Activated naive CD4-positive, alpha-beta T cell treated with anti-CD3 and anti-CD28 coated beads for 36 hours (primary cell): ENCODE measurements at regions of chr14 and their contacts with region 1.

Region 1: DNA sequence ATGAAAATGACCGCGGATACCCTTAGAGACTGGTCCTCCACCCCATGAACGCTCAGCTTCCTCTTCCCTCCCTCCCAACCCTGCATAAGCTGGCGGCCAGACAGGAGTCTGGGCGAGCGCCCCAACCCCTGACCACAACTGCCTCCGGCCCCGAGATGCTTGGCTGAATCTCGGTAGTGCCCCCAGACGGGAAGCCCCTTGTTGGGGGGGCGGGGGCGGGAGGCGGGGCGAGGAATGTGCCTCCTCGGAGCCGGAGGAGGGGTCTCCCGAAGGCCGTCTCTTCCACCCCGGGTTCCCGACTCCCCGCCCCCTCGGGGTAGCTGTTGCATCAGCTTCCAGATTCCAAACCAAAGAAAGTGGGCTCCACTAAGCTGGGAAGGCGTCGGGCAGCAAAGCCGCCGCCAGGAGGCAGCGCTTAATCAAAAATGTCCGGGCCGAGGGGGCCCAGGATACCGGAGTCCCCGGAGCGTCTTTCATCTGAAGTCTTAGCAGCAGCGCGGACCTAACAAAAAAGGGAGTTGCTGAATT is 7.1 kb upstream of the MRPL52 start:
- DNase-seq: peak; percentile 75
- H3K4me3 Mint-ChIP-seq: peak overlapping the region; percentile 61
- H3K27ac Mint-ChIP-seq: no peak overlapping the region
- H3K4me1 Mint-ChIP-seq: peaks cover 31% of the 10 kb centered on the region
- H3K27me3 Mint-ChIP-seq: peaks cover 1% of the 10 kb centered on the region

Region 2: DNA sequence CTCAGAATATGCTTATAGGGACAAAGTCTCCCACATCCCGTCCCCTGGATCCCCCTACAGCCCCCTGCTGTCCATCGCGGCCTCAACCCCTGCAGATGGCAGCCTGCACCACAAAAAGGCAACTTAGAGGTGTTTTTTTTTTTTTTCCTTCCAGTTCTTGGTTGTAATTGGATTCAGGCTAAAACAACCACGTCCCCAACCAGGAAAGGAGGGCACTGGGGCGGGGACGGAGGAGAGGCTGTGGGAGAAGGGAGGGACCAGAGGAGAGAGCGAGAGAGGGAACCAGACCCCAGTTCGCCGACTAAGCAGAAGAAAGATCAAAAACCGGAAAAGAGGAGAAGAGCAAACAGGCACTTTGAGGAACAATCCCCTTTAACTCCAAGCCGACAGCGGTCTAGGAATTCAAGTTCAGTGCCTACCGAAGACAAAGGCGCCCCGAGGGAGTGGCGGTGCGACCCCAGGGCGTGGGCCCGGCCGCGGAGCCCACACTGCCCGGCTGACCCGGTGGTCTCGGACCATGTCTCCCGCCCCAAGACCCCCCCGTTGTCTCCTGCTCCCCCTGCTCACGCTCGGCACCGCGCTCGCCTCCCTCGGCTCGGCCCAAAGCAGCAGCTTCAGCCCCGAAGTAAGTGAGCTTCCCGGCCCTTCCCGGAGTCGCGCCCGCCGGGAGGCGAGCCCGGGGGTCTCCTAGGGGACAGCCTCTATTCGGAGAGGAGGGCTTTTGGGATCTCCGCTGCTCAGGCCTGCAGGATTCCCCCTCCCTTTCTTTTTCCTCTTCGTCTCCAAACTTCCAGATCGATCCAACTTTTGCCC is 13.9 kb after region 1 on chr14 and contains the start of gene MMP14:
- CTCF ChIA-PET with region 1: interaction called, 27 read pairs
- intact Hi-C with region 1: no loop called
- DNase-seq: no peak
- H3K4me3 Mint-ChIP-seq: peak within 1 kb of the TSS; percentile 78
- H3K27ac Mint-ChIP-seq: no peak within 1 kb of the TSS
- H3K4me1 Mint-ChIP-seq: peaks cover 19% of the 10 kb centered on the region
- H3K27me3 Mint-ChIP-seq: peaks cover 4% of the 10 kb centered on the region
- total RNA-seq, gene MMP14: 1.3 to 2.1 TPM

Region 3: GRCh38 chr14:22900081-22900799 is 77.6 kb after region 1 on chr14:
- CTCF ChIA-PET with region 1: interaction called, 17 read pairs
- intact Hi-C with region 1: loop called (anchors 1 kb)
- DNase-seq: peak; percentile 64
- H3K4me3 Mint-ChIP-seq: no peak overlapping the region
- H3K27ac Mint-ChIP-seq: no peak overlapping the region
- H3K4me1 Mint-ChIP-seq: peaks cover 12% of the 10 kb centered on the region
- H3K27me3 Mint-ChIP-seq: no peaks in the 10 kb centered on the region